ENCODE measurements at regions of chr20 and their contacts with region 1.

Region 1: DNA sequence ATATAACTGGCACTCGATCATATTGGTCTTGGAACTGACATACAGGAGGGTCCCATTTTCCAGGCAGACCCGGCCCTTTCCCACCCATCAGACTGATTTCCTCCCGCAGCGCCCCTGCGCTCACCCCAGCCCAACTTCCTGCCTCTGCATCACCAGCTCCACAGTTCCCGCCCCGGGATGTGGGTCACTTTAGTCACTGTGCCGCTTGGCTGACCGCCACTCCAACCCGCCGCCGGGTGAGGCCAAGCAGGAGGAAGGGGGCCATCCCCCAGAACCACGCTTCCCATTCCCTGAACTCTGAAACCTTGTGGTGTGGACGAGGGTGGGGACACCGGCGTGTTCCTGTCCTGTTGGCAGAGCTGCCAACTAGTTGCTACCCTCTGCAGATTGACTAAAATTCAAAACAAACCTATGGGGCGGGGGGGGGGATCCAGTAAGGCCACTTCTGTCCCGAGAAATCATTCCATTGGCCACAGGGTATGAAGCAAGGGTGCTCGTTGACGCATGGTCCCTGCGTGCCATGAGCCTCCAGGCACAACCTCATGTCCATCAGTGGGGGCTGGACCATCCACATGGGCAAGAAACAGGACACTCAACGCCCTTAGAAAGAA is 12.3 kb downstream of the TGM2 start:
- DNase-seq: no peak
- H3K4me3 ChIP-seq: no peak overlapping the region
- H3K27ac ChIP-seq: no peak overlapping the region
- H3K4me1 ChIP-seq: no peaks in the 10 kb centered on the region
- H3K27me3 ChIP-seq: no peaks in the 10 kb centered on the region
- CTCF ChIP-seq: no peak

Region 2: GRCh38 chr20:38278131-38278530 is 125.4 kb after region 1 on chr20:
- CTCF ChIA-PET with region 1: no interaction called
- POLR2A ChIA-PET with region 1: interaction called, 17 read pairs
- intact Hi-C with region 1: no loop called
- DNase-seq: no peak
- H3K4me3 ChIP-seq: no peak overlapping the region
- H3K27ac ChIP-seq: no peak overlapping the region
- H3K4me1 ChIP-seq: no peaks in the 10 kb centered on the region
- H3K27me3 ChIP-seq: no peaks in the 10 kb centered on the region
- CTCF ChIP-seq: no peak

Region 3: DNA sequence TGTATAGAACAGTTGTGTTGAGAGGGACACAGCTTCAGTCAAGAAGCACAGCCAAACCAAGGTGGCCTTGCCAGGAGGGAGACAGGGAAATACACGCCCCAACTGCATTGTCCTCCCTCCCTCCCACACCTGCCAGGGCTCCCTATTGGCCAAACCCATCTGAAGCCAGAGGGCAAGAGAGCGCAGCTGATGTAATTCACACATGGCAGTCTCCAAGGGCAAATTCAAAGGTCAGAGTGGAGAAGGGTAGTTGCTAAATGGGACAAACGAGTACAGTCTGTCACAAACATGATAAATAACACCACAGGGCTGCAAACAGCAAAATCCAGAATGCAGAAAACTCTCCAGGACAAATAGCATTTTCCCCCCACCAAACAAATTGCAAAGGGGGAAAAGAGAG is 629.5 kb after region 1 on chr20:
- CTCF ChIA-PET with region 1: no interaction called
- POLR2A ChIA-PET with region 1: no interaction called
- intact Hi-C with region 1: no loop called
- DNase-seq: no peak
- H3K4me3 ChIP-seq: no peak overlapping the region
- H3K27ac ChIP-seq: no peak overlapping the region
- H3K4me1 ChIP-seq: no peaks in the 10 kb centered on the region
- H3K27me3 ChIP-seq: no peaks in the 10 kb centered on the region
- CTCF ChIP-seq: no peak